ENCODE measurements at regions of chr5 and their contacts with region 1.

Region 1: GRCh38 chr5:151771259-151772028 is at the start of gene G3BP1:
- DNase-seq: peak; percentile 90
- ATAC-seq: peak; percentile 76
- H3K4me3 Mint-ChIP-seq: peak within 1 kb of the TSS; percentile 94
- H3K27ac Mint-ChIP-seq: peak within 1 kb of the TSS; percentile 88
- H3K4me1 Mint-ChIP-seq: peaks cover 48% of the 10 kb centered on the region
- H3K27me3 Mint-ChIP-seq: no peaks in the 10 kb centered on the region
- CTCF ChIP-seq: no peak
- total RNA-seq, gene G3BP1: 227 and 239 TPM in 2 replicates

Region 2: GRCh38 chr5:150000256-150000989 is 1771.0 kb before region 1 on chr5 and contains the starts of genes HMGXB3 and TIGD6:
- CTCF ChIA-PET with region 1: no interaction called
- POLR2A ChIA-PET with region 1: no interaction called
- intact Hi-C with region 1: loop called (anchors 5 kb)
- DNase-seq: peak; percentile 87
- ATAC-seq: peak; percentile 85
- H3K4me3 Mint-ChIP-seq: peak within 1 kb of the TSS; percentile 95
- H3K27ac Mint-ChIP-seq: peak within 1 kb of the TSS; percentile 91
- H3K4me1 Mint-ChIP-seq: peaks cover 28% of the 10 kb centered on the region
- H3K27me3 Mint-ChIP-seq: no peaks in the 10 kb centered on the region
- CTCF ChIP-seq: no peak
- total RNA-seq, gene HMGXB3: 28.5 and 36.8 TPM in 2 replicates
- total RNA-seq, gene TIGD6: 3.5 and 4.2 TPM in 2 replicates

Region 3: DNA sequence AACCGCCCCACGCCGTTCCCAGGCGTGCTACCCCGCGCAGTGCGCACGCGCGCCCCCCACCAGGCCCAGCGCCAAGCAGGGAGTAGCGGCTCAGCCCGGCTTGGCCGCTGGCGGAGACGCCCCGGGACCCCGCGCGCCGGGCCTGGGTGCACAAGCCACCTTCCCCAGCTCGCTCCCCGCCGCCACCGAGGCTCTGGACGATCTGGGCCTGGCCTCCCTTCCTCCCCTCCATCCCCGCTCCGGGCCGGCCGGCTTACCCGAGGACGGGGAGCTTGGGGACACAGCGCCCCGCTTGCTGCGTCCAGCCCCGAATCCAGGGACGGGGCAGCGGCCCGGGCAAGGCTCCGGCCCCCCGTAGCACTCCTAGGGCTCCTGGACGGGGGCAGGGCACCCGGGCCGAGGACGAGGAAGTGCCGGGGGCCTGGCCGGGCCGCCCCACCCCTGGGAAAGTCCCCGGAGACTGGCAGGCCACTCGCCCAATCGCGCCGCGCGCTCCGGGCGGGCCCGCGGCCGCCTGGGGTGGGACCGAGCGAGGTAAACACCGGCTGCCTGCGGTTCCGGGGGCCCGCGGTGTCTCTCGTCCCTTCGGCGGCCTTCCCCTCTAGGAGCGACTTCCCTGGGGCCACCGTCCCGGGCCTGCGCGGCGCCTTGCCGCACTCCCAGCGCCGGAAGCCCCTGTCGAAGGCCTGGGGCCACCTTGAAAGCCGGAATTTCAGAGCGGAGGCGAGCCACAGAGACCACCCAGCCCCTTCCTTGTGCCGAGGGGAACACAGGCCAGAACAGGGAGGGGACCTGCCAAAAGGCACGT is 690.6 kb before region 1 on chr5 and contains the start of gene TNIP1:
- CTCF ChIA-PET with region 1: no interaction called
- POLR2A ChIA-PET with region 1: no interaction called
- intact Hi-C with region 1: loop called (anchors 10 kb)
- DNase-seq: peak; percentile 99
- ATAC-seq: peak; percentile 81
- H3K4me3 Mint-ChIP-seq: peak within 1 kb of the TSS; percentile 93
- H3K27ac Mint-ChIP-seq: peak within 1 kb of the TSS; percentile 94
- H3K4me1 Mint-ChIP-seq: peaks cover 88% of the 10 kb centered on the region
- H3K27me3 Mint-ChIP-seq: no peaks in the 10 kb centered on the region
- CTCF ChIP-seq: no peak
- total RNA-seq, gene TNIP1: 506 and 512 TPM in 2 replicates

Region 4: GRCh38 chr5:151596828-151597539 is 174.5 kb before region 1 on chr5:
- CTCF ChIA-PET with region 1: no interaction called
- POLR2A ChIA-PET with region 1: no interaction called
- intact Hi-C with region 1: no loop called
- DNase-seq: no peak
- ATAC-seq: no peak
- H3K4me3 Mint-ChIP-seq: no peak overlapping the region
- H3K27ac Mint-ChIP-seq: no peak overlapping the region
- H3K4me1 Mint-ChIP-seq: no peaks in the 10 kb centered on the region
- H3K27me3 Mint-ChIP-seq: no peaks in the 10 kb centered on the region
- CTCF ChIP-seq: no peak

Region 5: DNA sequence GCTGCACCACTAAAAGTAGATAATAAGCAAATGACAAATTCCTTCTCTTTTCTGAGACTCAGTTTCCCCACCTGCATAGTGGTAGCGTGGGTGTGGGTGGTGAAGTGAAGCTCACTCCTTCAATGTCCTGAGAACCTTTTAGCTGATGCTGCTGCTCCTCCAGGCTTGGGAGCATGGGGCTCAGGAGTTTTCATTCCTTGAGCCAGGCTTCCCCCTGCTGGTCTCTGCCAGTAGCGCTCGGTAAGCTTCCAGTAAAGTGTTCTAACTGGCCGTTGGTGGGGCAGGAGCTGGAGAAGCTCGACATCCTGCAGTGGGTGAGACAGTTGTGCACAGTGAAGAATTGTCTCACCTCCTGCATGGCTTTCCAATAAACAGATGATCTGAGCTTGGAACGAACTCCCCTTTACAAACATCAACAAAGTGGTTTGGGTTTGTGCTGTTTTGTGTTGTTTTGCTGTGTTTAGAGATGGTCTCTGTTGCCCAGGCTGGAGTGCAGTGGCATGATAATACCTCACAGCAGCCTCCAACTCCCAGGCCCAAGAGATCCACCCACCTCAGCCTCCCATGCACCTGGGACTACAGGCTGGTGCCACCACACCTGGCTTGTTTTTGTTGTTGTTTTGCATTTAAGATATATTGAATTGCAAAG is 119.3 kb before region 1 on chr5:
- CTCF ChIA-PET with region 1: interaction called, 10 read pairs
- POLR2A ChIA-PET with region 1: interaction called, 4 read pairs
- intact Hi-C with region 1: no loop called
- DNase-seq: peak; percentile 49
- ATAC-seq: peak; percentile 96
- H3K4me3 Mint-ChIP-seq: no peak overlapping the region
- H3K27ac Mint-ChIP-seq: no peak overlapping the region
- H3K4me1 Mint-ChIP-seq: no peaks in the 10 kb centered on the region
- H3K27me3 Mint-ChIP-seq: peaks cover 8% of the 10 kb centered on the region
- CTCF ChIP-seq: peak; percentile 36

Region 6: GRCh38 chr5:151719228-151720000 is 52.0 kb before region 1 on chr5:
- CTCF ChIA-PET with region 1: interaction called, 5 read pairs
- POLR2A ChIA-PET with region 1: interaction called, 33 read pairs
- intact Hi-C with region 1: loop called (anchors 1 kb)
- DNase-seq: no peak
- ATAC-seq: no peak
- H3K4me3 Mint-ChIP-seq: no peak overlapping the region
- H3K27ac Mint-ChIP-seq: no peak overlapping the region
- H3K4me1 Mint-ChIP-seq: peaks cover 30% of the 10 kb centered on the region
- H3K27me3 Mint-ChIP-seq: no peaks in the 10 kb centered on the region
- CTCF ChIP-seq: no peak

Region 7: GRCh38 chr5:151751091-151751490 is 20.4 kb before region 1 on chr5:
- CTCF ChIA-PET with region 1: interaction called, 4 read pairs
- POLR2A ChIA-PET with region 1: interaction called, 134 read pairs
- intact Hi-C with region 1: no loop called
- DNase-seq: no peak
- ATAC-seq: no peak
- H3K4me3 Mint-ChIP-seq: no peak overlapping the region
- H3K27ac Mint-ChIP-seq: no peak overlapping the region
- H3K4me1 Mint-ChIP-seq: peaks cover 34% of the 10 kb centered on the region
- H3K27me3 Mint-ChIP-seq: no peaks in the 10 kb centered on the region
- CTCF ChIP-seq: no peak

Region 8: GRCh38 chr5:151787817-151788216 is 16.4 kb after region 1 on chr5:
- CTCF ChIA-PET with region 1: no interaction called
- POLR2A ChIA-PET with region 1: interaction called, 14 read pairs
- intact Hi-C with region 1: loop called (anchors 2 kb)
- DNase-seq: no peak
- ATAC-seq: no peak
- H3K4me3 Mint-ChIP-seq: no peak overlapping the region
- H3K27ac Mint-ChIP-seq: no peak overlapping the region
- H3K4me1 Mint-ChIP-seq: peaks cover 28% of the 10 kb centered on the region
- H3K27me3 Mint-ChIP-seq: no peaks in the 10 kb centered on the region
- CTCF ChIP-seq: no peak

Measured in activated B cell treated with CpG ODN at 0.5 μM for 24 hours (primary cell).